ENCODE measurements at regions of chr15 and their contacts with region 1.

Region 1: GRCh38 chr15:57462381-57462780 is 86.1 kb downstream of the CGNL1 start:
- DNase-seq: no peak
- H3K4me3 ChIP-seq: no peak overlapping the region
- H3K27ac ChIP-seq: peak overlapping the region in 1 of 2 donors; percentile 23
- H3K4me1 ChIP-seq: peaks cover 0 to 7% of the 10 kb centered on the region in 2 donors
- H3K27me3 ChIP-seq: no peaks in the 10 kb centered on the region
- CTCF ChIP-seq: peak in 2 of 4 experiments; percentile 18 to 23
- POLR2A ChIP-seq: no peak

Region 2: GRCh38 chr15:57375827-57376695 is 86.3 kb before region 1 on chr15 and contains the start of gene CGNL1:
- intact Hi-C with region 1: loop called (anchors 10 kb)
- DNase-seq: peak; percentile 40 to 63
- H3K4me3 ChIP-seq: peak within 1 kb of the TSS; percentile 82 to 97
- H3K27ac ChIP-seq: peak within 1 kb of the TSS; percentile 83 to 86
- H3K4me1 ChIP-seq: no peaks in the 10 kb centered on the region
- H3K27me3 ChIP-seq: no peaks in the 10 kb centered on the region
- CTCF ChIP-seq: no peak
- POLR2A ChIP-seq: peak in 1 of 2 donors; percentile 61
- total RNA-seq, gene CGNL1: 15.1 to 74.4 (median 31.7) TPM

Region 3: GRCh38 chr15:57505949-57506391 is 43.6 kb after region 1 on chr15:
- intact Hi-C with region 1: no loop called
- DNase-seq: peak in 1 of 2 donors; percentile 44
- H3K4me3 ChIP-seq: no peak overlapping the region
- H3K27ac ChIP-seq: peak overlapping the region; percentile 43 to 62
- H3K4me1 ChIP-seq: no peaks in the 10 kb centered on the region
- H3K27me3 ChIP-seq: no peaks in the 10 kb centered on the region
- CTCF ChIP-seq: no peak
- POLR2A ChIP-seq: no peak